Panc1 (cell line): ENCODE measurements at regions of chr19 and their contacts with region 1.

Region 1: GRCh38 chr19:39792999-39793546 is 14.4 kb downstream of the LEUTX start:
- DNase-seq: peak; percentile 100
- ATAC-seq: peak; percentile 98
- H3K4me3 ChIP-seq: peak overlapping the region; percentile 29 to 42
- H3K27ac ChIP-seq: no peak overlapping the region
- H3K4me1 ChIP-seq: peaks cover 13% of the 10 kb centered on the region
- H3K27me3 ChIP-seq: peaks cover 29% of the 10 kb centered on the region
- CTCF ChIP-seq: no peak

Region 2: DNA sequence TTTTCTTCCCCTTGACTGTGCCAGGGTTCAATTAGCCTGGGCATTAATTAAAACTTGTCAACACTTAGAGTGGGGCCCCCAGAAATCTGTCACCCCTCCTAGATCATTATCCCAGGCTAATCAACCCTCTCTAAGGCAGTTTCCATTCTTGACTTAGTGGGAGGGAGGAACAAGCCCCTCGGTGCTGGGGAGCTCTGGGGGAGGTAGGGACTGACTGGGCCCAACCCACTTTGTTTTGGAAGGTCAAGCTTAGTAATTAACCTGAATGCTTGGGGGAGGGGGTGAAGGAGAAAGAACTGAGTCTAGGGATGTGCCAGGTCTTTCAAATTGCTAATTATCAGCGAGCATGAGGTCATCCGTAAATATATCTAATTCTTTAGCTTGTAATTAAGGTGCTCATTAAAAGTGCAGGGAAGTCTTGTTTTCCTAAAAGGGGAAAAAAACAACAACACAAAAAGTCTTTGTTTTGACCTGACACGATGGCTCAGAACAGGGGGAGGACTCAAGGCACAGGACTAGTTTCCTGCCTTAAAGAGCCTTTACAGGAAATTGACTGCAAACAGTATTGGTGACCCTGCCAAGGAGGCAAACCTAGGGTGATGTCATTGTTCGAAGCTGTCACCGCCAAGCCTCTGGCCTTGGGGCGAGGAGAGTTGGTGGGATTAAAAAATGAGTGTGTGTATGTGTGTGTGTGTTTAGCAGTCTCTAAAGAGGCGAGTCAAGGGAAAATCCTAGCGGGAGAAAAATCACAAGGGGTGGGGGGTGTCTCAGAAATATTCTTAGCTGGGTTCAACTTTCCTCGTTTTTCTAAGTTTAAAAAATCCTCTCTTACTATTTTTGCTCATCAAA is 1126.2 kb before region 1 on chr19:
- CTCF ChIA-PET with region 1: no interaction called
- POLR2A ChIA-PET with region 1: no interaction called
- in situ Hi-C with region 1: loop called (anchors 25 kb)
- intact Hi-C with region 1: no loop called
- DNase-seq: no peak
- ATAC-seq: peak; percentile 34
- H3K4me3 ChIP-seq: peak overlapping the region in 1 of 2 experiments; percentile 12; a peak in 2 of 4 replicates
- H3K27ac ChIP-seq: peak overlapping the region; percentile 96
- H3K4me1 ChIP-seq: peaks cover 100% of the 10 kb centered on the region
- H3K27me3 ChIP-seq: no peaks in the 10 kb centered on the region
- CTCF ChIP-seq: no peak

Region 3: GRCh38 chr19:39173250-39173940 is 619.7 kb before region 1 on chr19:
- CTCF ChIA-PET with region 1: no interaction called
- POLR2A ChIA-PET with region 1: interaction called, 21 read pairs
- in situ Hi-C with region 1: no loop called
- intact Hi-C with region 1: no loop called
- DNase-seq: no peak
- ATAC-seq: no peak
- H3K4me3 ChIP-seq: no peak overlapping the region
- H3K27ac ChIP-seq: no peak overlapping the region
- H3K4me1 ChIP-seq: peaks cover 12% of the 10 kb centered on the region
- H3K27me3 ChIP-seq: no peaks in the 10 kb centered on the region
- CTCF ChIP-seq: no peak

Region 4: DNA sequence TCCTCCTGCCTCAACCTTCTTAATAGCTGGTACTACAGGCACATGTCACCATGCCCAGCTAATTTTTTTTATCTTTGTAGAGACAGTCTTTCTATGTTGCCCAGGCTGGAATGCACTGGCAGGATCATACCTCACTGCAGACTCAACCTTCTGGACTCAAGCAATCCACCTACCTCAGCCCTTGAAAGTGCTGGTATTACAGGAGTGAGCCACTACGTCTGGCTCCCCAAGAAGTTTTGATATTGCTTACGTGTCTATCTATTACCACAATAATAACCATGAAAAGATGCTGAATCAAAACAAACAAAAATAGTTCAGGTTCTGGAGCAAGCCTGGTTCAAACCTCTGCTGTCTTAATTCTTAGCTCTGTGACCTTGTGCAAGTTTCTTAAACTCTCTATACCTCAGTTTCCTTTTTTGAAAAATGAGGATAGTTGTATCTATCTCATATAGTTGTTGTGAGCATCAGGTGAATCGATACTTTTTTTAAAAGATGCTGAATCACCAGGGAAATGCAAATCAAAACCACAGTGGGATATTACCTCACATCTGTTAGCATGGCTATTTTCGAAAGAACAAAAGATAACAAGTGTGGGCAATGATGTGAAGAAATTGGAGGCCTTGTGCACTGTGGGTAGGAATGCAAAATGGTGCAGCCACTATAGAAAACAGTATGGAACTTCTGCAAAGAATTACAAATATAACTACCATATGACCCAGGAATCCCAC is 33.5 kb before region 1 on chr19:
- CTCF ChIA-PET with region 1: interaction called, 273 read pairs
- POLR2A ChIA-PET with region 1: no interaction called
- in situ Hi-C with region 1: no loop called
- intact Hi-C with region 1: no loop called
- DNase-seq: no peak
- ATAC-seq: no peak
- H3K4me3 ChIP-seq: no peak overlapping the region
- H3K27ac ChIP-seq: no peak overlapping the region
- H3K4me1 ChIP-seq: no peaks in the 10 kb centered on the region
- H3K27me3 ChIP-seq: peaks cover 81% of the 10 kb centered on the region
- CTCF ChIP-seq: no peak

Region 5: DNA sequence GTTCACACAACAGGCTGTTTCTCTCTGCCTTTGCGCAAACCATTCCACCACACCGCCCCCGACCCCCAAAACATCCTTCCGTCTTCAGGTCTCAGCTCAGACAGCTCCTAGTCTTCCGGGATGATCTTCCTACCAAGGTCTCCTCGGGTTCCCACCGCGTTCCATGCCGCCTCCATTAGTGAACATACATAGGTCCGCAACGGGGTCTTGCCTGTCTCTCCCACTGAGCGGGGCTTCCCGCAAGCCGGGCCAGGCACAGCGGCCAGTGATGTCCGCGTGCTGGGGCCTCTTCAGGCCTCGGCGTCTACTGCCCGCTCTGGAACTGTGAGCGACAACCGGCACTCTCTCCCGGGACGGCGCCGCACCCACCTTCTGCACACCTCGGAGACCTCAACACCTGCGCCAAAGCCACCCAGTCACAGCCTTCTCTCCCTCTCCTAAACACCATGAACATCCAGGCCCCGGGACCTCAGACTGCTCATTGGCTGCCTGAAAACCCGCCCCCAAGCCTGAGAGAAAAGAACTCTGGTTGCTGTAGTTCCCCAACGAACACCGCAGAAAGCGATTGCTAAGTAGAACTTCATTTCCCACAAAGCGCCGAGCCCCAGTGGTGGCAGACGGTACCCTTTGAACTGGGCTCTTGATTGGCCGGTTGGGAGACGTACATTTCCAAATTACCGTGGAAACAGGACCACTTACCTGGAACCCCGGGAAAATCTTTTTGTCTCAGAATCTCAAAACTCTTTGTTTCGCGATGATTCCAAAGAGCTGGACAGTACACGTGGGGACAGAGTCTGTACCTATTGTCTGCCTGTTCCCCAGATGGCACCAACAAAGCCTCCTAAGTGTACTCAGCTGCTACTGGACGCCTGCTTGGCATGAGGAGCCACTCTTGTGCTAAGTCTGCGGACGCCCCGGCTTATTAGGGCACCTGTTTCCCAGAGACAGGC is 31.3 kb after region 1 on chr19:
- CTCF ChIA-PET with region 1: interaction called, 25 read pairs
- POLR2A ChIA-PET with region 1: interaction called, 12 read pairs
- in situ Hi-C with region 1: no loop called
- intact Hi-C with region 1: loop called (anchors 1 kb)
- DNase-seq: peak; percentile 100
- ATAC-seq: peak; percentile 97
- H3K4me3 ChIP-seq: peak overlapping the region; percentile 37 to 51
- H3K27ac ChIP-seq: peak overlapping the region; percentile 78
- H3K4me1 ChIP-seq: peaks cover 22% of the 10 kb centered on the region
- H3K27me3 ChIP-seq: no peaks in the 10 kb centered on the region
- CTCF ChIP-seq: no peak

Region 6: GRCh38 chr19:39951686-39952085 is 158.6 kb after region 1 on chr19:
- CTCF ChIA-PET with region 1: interaction called, 10 read pairs
- POLR2A ChIA-PET with region 1: interaction called, 4 read pairs
- in situ Hi-C with region 1: no loop called
- intact Hi-C with region 1: no loop called
- DNase-seq: no peak
- ATAC-seq: peak; percentile 20
- H3K4me3 ChIP-seq: no peak overlapping the region
- H3K27ac ChIP-seq: no peak overlapping the region
- H3K4me1 ChIP-seq: no peaks in the 10 kb centered on the region
- H3K27me3 ChIP-seq: no peaks in the 10 kb centered on the region
- CTCF ChIP-seq: no peak

Region 7: GRCh38 chr19:40305403-40305802 is 512.3 kb after region 1 on chr19:
- CTCF ChIA-PET with region 1: interaction called, 23 read pairs
- POLR2A ChIA-PET with region 1: no interaction called
- in situ Hi-C with region 1: no loop called
- intact Hi-C with region 1: no loop called
- DNase-seq: peak; percentile 100
- ATAC-seq: peak; percentile 92
- H3K4me3 ChIP-seq: no peak overlapping the region
- H3K27ac ChIP-seq: no peak overlapping the region
- H3K4me1 ChIP-seq: no peaks in the 10 kb centered on the region
- H3K27me3 ChIP-seq: peaks cover 11% of the 10 kb centered on the region
- CTCF ChIP-seq: no peak